Ovary (tissue), 10 donors: ENCODE measurements at regions of chr2 and their contacts with region 1.

Region 1: GRCh38 chr2:139628931-139629330 is 848.7 kb upstream of the NXPH2 start:
- DNase-seq: no peak
- H3K4me3 ChIP-seq: no peak overlapping the region
- H3K27ac ChIP-seq: no peak overlapping the region
- H3K4me1 ChIP-seq: no peaks in the 10 kb centered on the region
- H3K27me3 ChIP-seq: no peaks in the 10 kb centered on the region
- CTCF ChIP-seq: no peak
- EP300 ChIP-seq: no peak
- POLR2A ChIP-seq: no peak

Region 2: DNA sequence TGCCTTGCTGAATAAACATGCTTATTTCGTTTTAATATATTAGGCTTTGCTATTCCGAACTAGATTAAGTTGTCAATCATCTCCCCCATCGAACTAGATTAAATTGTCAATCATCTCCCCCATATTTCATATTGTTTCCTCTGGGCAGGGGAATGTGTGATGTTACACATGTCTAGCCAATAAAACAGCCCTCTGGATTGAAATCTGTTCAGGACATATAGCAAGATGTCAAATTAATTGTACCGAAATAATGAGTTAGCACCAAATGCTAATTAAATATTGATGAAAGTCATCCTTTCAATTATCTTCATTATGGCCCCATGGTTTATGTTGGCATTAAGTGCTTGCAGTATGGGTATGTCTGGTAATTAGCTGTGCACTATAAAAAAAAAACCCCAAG is 991.9 kb before region 1 on chr2:
- intact Hi-C with region 1: loop called in 1 of 4 experiments (anchors 5 kb)
- DNase-seq: no peak
- H3K4me3 ChIP-seq: no peak overlapping the region
- H3K27ac ChIP-seq: no peak overlapping the region
- H3K4me1 ChIP-seq: no peaks in the 10 kb centered on the region
- H3K27me3 ChIP-seq: no peaks in the 10 kb centered on the region
- CTCF ChIP-seq: no peak
- EP300 ChIP-seq: no peak
- POLR2A ChIP-seq: no peak

Region 3: GRCh38 chr2:139674577-139674976 is 45.6 kb after region 1 on chr2:
- intact Hi-C with region 1: no loop called
- DNase-seq: no peak
- H3K4me3 ChIP-seq: no peak overlapping the region
- H3K27ac ChIP-seq: no peak overlapping the region
- H3K4me1 ChIP-seq: no peaks in the 10 kb centered on the region
- H3K27me3 ChIP-seq: no peaks in the 10 kb centered on the region
- CTCF ChIP-seq: no peak
- EP300 ChIP-seq: no peak
- POLR2A ChIP-seq: no peak